Endothelial cell of umbilical vein (primary cell): ENCODE measurements at regions of chr16 and their contacts with region 1.

Region 1: GRCh38 chr16:4261557-4262172 is 11.2 kb downstream of the TFAP4 start:
- DNase-seq: peak; percentile 14
- H3K4me3 ChIP-seq: no peak overlapping the region
- H3K27ac ChIP-seq: no peak overlapping the region
- H3K4me1 ChIP-seq: no peaks in the 10 kb centered on the region
- H3K27me3 ChIP-seq: no peaks in the 10 kb centered on the region
- CTCF ChIP-seq: peak; percentile 77
- POLR2A ChIP-seq: no peak

Region 2: GRCh38 chr16:4081521-4082021 is 180.1 kb before region 1 on chr16:
- CTCF ChIA-PET with region 1: no interaction called
- POLR2A ChIA-PET with region 1: no interaction called
- dilution Hi-C with region 1: no loop called
- intact Hi-C with region 1: no loop called
- DNase-seq: no peak
- H3K4me3 ChIP-seq: no peak overlapping the region
- H3K27ac ChIP-seq: no peak overlapping the region
- H3K4me1 ChIP-seq: no peaks in the 10 kb centered on the region
- H3K27me3 ChIP-seq: no peaks in the 10 kb centered on the region
- CTCF ChIP-seq: no peak
- POLR2A ChIP-seq: no peak

Region 3: DNA sequence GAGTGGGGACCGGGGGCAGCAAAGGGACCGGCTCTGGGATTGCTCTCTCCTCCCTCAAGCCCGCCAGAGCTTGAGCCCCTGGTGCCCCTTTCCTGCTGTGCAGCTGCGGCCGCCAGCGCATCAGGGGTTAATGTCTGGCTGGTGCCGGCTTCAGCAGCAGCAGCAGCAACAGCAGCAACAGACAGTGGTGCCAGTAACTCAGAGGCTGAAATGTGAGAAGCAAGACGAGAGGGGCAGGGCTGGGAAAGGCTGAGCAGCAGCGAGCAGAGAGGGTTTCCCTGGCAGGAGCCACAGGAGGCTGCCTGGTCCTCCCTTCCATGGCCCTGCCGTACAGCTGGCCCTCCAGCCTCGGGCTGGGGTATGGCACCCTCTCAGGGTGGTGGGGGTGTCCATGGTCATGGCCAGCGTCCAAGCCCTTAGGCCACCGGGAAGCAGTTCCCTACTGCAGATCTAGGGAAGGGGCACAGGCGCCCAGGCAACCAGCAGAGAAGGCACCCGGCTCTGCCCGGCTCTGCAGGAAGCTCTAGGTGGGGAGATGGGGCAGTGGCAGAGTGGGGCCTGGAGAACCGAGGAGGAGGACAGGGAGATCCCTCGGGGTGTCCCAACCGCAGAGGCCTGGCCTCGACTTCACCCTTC is 32.3 kb after region 1 on chr16:
- CTCF ChIA-PET with region 1: interaction called, 7 read pairs
- POLR2A ChIA-PET with region 1: interaction called, 10 read pairs
- dilution Hi-C with region 1: no loop called
- intact Hi-C with region 1: no loop called
- DNase-seq: peak; percentile 37
- H3K4me3 ChIP-seq: no peak overlapping the region
- H3K27ac ChIP-seq: no peak overlapping the region
- H3K4me1 ChIP-seq: peaks cover 7% of the 10 kb centered on the region
- H3K27me3 ChIP-seq: no peaks in the 10 kb centered on the region
- CTCF ChIP-seq: no peak
- POLR2A ChIP-seq: no peak